Activated CD4-positive, alpha-beta T cell treated with anti-CD3 and anti-CD28 coated beads for 36 hours (primary cell): ENCODE measurements at regions of chr1 and their contacts with region 1.

Region 1: GRCh38 chr1:109426278-109427170 is at the start of gene PSMA5:
- DNase-seq: peak; percentile 97
- ATAC-seq: peak; percentile 97
- H3K4me3 Mint-ChIP-seq: peak within 1 kb of the TSS; percentile 91
- H3K27ac Mint-ChIP-seq: peak within 1 kb of the TSS; percentile 96
- H3K4me1 Mint-ChIP-seq: peaks cover 34% of the 10 kb centered on the region
- H3K27me3 Mint-ChIP-seq: no peaks in the 10 kb centered on the region
- total RNA-seq, gene PSMA5: 151 to 249 TPM

Region 2: GRCh38 chr1:109041621-109042468 is 384.7 kb before region 1 on chr1 and contains the start of gene WDR47:
- CTCF ChIA-PET with region 1: no interaction called
- POLR2A ChIA-PET with region 1: no interaction called
- intact Hi-C with region 1: loop called in 1 of 2 experiments (anchors 2 kb)
- DNase-seq: peak; percentile 98
- ATAC-seq: peak; percentile 99
- H3K4me3 Mint-ChIP-seq: peak within 1 kb of the TSS; percentile 82
- H3K27ac Mint-ChIP-seq: peak within 1 kb of the TSS; percentile 65
- H3K4me1 Mint-ChIP-seq: peaks cover 16% of the 10 kb centered on the region
- H3K27me3 Mint-ChIP-seq: no peaks in the 10 kb centered on the region
- total RNA-seq, gene WDR47: 6.9 to 7.6 TPM

Region 3: GRCh38 chr1:109099938-109100773 is 326.4 kb before region 1 on chr1:
- CTCF ChIA-PET with region 1: no interaction called
- POLR2A ChIA-PET with region 1: no interaction called
- intact Hi-C with region 1: loop called (anchors 1 to 10 kb)
- DNase-seq: peak; percentile 98
- ATAC-seq: peak; percentile 94
- H3K4me3 Mint-ChIP-seq: peak overlapping the region; percentile 98
- H3K27ac Mint-ChIP-seq: peak overlapping the region; percentile 98
- H3K4me1 Mint-ChIP-seq: peaks cover 6% of the 10 kb centered on the region
- H3K27me3 Mint-ChIP-seq: no peaks in the 10 kb centered on the region

Region 4: DNA sequence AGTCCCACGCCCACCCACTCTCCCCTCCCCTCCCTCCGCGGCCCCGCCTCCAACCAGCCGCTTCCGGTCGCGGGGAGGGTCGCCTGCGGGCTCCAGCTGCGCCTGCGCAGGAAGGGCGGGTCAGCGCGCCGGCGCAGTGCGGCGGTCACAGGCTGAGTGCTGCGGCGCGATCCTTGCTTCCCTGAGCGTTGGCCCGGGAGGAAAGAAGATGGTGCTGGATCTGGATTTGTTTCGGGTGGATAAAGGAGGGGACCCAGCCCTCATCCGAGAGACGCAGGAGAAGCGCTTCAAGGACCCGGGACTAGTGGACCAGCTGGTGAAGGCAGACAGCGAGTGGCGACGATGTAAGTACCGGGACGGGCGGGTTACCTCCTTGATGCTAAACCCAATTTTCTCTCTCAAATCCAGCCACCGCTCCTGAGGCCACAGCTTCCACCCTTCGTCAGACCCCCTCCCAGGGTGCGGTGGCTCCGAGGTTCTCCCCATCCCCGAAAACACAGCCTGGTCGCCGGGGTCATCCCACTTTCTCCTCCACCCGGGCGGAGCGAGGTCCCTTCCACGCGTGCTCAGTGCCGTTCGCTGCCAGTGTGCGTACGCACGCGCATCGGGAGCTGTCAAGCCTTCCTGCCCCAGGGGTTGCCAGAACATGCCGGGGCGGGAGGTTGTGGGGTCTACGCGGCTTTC is 212.6 kb before region 1 on chr1 and contains the start of gene SARS1:
- CTCF ChIA-PET with region 1: no interaction called
- POLR2A ChIA-PET with region 1: interaction called, 5 read pairs
- intact Hi-C with region 1: loop called in 1 of 2 experiments (anchors 1 kb)
- DNase-seq: peak; percentile 93
- ATAC-seq: peak; percentile 85
- H3K4me3 Mint-ChIP-seq: peak within 1 kb of the TSS; percentile 97
- H3K27ac Mint-ChIP-seq: peak within 1 kb of the TSS; percentile 95
- H3K4me1 Mint-ChIP-seq: peaks cover 32% of the 10 kb centered on the region
- H3K27me3 Mint-ChIP-seq: peaks cover 1% of the 10 kb centered on the region
- total RNA-seq, gene SARS1: 224 to 240 TPM

Region 5: DNA sequence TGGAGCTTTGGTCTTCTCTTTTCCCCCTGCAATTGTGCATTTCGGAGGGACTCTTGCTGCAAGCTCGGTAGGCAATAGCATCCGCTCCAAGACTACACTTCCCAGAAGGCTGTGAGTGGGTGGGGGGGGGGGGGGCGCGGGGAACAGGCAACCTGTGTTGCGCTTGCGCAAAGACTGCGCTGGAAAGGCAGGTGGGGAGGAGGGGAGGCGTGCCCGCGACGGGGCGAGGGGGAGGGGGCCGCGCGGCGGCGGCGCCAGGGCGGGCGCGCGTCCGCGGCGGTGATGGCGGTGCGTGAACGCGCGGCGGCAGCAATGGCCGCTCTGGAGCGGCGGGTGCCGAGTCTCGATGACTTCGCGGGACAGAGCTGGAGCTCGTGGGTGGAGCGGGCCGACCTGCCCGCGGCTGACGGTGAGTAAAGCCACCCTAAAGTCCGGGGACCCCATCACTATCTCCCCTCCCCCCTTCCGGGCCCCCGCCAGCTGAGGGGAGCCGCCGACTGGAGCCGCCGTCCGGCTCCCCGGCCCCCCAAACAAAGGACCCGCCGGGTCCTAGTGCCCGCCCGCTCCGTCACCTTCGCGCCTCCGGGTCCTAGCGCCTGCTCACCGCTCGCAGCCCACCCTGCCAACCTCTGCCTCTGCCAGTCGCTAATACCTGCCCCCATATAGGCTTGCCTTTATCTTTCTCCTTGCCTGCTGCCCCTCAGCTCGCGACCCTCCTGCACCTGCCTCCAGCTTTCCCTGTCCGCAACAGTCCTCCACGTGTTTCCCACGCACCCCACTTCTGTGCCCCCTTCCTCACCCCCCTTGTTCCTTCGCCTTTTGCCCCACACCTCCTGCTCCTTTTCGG is 57.4 kb after region 1 on chr1 and contains the start of gene ATXN7L2:
- CTCF ChIA-PET with region 1: no interaction called
- POLR2A ChIA-PET with region 1: interaction called, 8 read pairs
- intact Hi-C with region 1: loop called (anchors 1 kb)
- DNase-seq: peak; percentile 96
- ATAC-seq: peak; percentile 79
- H3K4me3 Mint-ChIP-seq: peak within 1 kb of the TSS; percentile 88
- H3K27ac Mint-ChIP-seq: peak within 1 kb of the TSS; percentile 96
- H3K4me1 Mint-ChIP-seq: peaks cover 33% of the 10 kb centered on the region
- H3K27me3 Mint-ChIP-seq: no peaks in the 10 kb centered on the region
- total RNA-seq, gene ATXN7L2: 11.7 to 13.0 TPM

Region 6: DNA sequence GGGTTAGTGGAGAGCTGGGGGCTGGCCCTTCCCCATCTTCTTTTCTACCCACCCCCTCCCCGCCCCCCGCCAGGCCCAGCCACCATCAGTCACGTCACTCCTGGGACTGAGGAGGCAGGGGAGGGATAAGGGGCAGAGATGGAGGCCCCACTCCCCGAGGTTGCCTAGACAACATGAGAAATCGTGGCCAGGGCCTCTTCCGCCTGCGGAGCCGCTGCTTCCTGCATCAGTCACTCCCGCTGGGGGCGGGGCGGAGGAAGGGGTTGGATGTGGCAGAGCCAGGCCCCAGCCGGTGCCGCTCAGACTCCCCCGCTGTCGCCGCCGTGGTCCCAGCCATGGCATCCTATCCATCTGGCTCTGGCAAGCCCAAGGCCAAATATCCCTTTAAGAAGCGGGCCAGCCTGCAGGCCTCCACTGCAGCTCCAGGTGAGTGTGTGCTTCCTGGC is 194.3 kb after region 1 on chr1:
- CTCF ChIA-PET with region 1: no interaction called
- POLR2A ChIA-PET with region 1: no interaction called
- intact Hi-C with region 1: loop called in 1 of 2 experiments (anchors 1 kb)
- DNase-seq: peak; percentile 99
- ATAC-seq: peak; percentile 86
- H3K4me3 Mint-ChIP-seq: peak overlapping the region; percentile 97
- H3K27ac Mint-ChIP-seq: peak overlapping the region; percentile 97
- H3K4me1 Mint-ChIP-seq: peaks cover 60% of the 10 kb centered on the region
- H3K27me3 Mint-ChIP-seq: no peaks in the 10 kb centered on the region

Region 7: GRCh38 chr1:110872745-110873720 is 1446.5 kb after region 1 on chr1 and contains the start of gene CD53:
- CTCF ChIA-PET with region 1: no interaction called
- POLR2A ChIA-PET with region 1: no interaction called
- intact Hi-C with region 1: loop called in 1 of 2 experiments (anchors 10 kb)
- DNase-seq: peak; percentile 62
- ATAC-seq: peak; percentile 33
- H3K4me3 Mint-ChIP-seq: peak within 1 kb of the TSS; percentile 85
- H3K27ac Mint-ChIP-seq: peak within 1 kb of the TSS; percentile 95
- H3K4me1 Mint-ChIP-seq: peaks cover 39% of the 10 kb centered on the region
- H3K27me3 Mint-ChIP-seq: no peaks in the 10 kb centered on the region
- total RNA-seq, gene CD53: 238 to 244 TPM